Left colon (tissue), 2 donors: ENCODE measurements at regions of chr18 and their contacts with region 1.

Region 1: DNA sequence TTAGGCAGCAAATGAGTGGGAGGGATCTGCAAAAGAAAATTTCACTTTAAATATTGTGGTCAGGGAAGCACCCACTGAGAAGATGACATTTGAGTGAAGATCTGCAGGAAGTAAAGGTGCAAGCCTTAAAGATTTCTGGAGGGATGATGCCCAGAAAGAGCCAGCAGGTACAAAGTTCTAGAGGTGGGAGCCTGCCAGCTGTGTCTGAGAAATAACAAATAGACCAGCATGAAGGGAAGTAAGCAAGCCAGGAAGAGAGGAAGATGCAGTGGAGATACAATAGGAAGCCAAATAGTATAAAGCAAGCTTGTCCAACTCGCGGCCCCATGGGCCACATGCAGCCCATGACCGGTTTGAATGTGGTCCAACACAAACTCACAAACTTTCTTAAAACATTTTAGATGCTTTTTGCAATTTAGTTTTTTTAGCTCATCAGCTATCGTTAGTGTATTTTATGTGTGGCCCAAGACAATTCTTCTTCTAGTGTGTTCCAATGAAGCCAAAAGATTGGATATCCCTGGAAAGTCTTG is 489.9 kb downstream of the DCC start:
- DNase-seq: no peak
- ATAC-seq: no peak

Region 2: DNA sequence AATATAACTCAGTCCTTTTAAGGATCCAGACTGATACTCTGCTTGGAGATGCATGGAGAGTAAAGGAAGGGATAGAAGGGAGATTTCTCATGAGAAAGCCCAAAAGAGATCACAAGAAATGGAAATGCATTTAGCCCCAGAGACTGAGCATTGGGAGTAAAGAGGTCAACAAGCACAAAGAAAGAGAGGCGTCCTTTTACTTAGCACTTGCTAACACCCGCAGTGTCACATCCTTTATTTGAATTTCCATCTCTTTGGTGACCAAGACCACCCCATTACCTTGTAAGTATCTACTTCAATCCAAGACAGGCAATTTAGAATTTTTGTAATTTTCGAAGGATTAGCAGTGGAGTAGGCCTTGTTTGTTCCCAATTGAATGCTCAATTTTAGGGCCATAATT is 601.8 kb before region 1 on chr18:
- intact Hi-C with region 1: no loop called
- DNase-seq: no peak
- ATAC-seq: no peak

Region 3: GRCh38 chr18:52875725-52876124 is 45.8 kb after region 1 on chr18:
- intact Hi-C with region 1: loop called in 1 of 2 experiments (anchors 5 kb)
- DNase-seq: no peak
- ATAC-seq: no peak